AG04449 (cell line): ENCODE measurements at regions of chr14 and their contacts with region 1.

Region 1: DNA sequence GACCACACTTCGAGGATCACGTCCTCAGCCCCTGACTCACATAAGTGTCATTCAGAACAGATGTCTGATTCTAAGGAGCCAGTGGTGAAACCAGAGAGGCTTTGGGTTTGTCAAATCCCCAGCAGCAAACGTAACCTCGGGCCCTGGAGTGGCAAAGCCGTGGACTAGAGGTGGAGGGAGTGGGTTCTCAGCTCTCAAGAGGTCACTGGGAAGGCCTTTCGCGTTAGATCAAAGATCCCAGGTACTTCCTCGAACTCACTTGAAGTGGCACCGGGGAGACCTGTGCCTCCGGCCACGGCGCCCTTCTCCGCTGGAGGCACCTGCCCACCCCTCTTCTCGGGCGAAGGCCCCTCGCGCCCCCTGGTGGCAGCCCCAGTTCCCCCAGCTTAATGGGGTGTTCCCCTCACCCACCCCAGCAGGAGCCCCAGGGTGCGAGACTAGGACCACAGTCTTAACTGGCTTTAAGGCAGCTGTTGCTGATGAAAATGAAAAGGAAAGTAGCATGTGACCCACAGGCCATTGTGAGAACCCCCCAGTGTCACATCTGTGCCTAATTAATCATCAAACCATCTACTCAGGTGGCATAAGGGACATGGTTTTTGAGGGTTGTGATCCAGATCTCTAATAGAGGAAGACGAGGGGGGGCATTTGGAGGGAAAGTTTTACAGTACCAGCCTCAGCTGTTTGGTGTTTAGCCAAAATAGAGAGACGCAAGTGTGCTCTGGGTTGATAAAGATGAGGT is 672 bp upstream of the ESR2 start:
- DNase-seq: no peak
- H3K4me3 ChIP-seq: peak overlapping the region; percentile 47
- CTCF ChIP-seq: peak; percentile 94

Region 2: GRCh38 chr14:64012720-64013119 is 282.1 kb before region 1 on chr14:
- CTCF ChIA-PET with region 1: interaction called, 95 read pairs
- POLR2A ChIA-PET with region 1: no interaction called
- DNase-seq: no peak
- H3K4me3 ChIP-seq: no peak overlapping the region
- CTCF ChIP-seq: no peak

Region 3: GRCh38 chr14:64040044-64040443 is 254.8 kb before region 1 on chr14:
- CTCF ChIA-PET with region 1: interaction called, 86 read pairs
- POLR2A ChIA-PET with region 1: no interaction called
- DNase-seq: no peak
- H3K4me3 ChIP-seq: no peak overlapping the region
- CTCF ChIP-seq: peak; percentile 5

Region 4: GRCh38 chr14:64137657-64138290 is 157.1 kb before region 1 on chr14:
- CTCF ChIA-PET with region 1: interaction called, 32 read pairs
- POLR2A ChIA-PET with region 1: no interaction called
- DNase-seq: no peak
- H3K4me3 ChIP-seq: no peak overlapping the region
- CTCF ChIP-seq: peak; percentile 28

Region 5: GRCh38 chr14:64329149-64329548 is 34.3 kb after region 1 on chr14:
- CTCF ChIA-PET with region 1: no interaction called
- POLR2A ChIA-PET with region 1: no interaction called
- DNase-seq: no peak
- H3K4me3 ChIP-seq: no peak overlapping the region
- CTCF ChIP-seq: no peak